ENCODE measurements at regions of chr7 and their contacts with region 1.

Region 1: GRCh38 chr7:27869044-27869443 is 129.1 kb downstream of the TAX1BP1 start:
- DNase-seq: no peak
- H3K4me3 ChIP-seq: no peak overlapping the region
- H3K27ac ChIP-seq: no peak overlapping the region
- H3K4me1 ChIP-seq: peaks cover 0 to 28% (median 19%) of the 10 kb centered on the region in 4 donors
- H3K27me3 ChIP-seq: no peaks in the 10 kb centered on the region
- CTCF ChIP-seq: no peak

Region 2: DNA sequence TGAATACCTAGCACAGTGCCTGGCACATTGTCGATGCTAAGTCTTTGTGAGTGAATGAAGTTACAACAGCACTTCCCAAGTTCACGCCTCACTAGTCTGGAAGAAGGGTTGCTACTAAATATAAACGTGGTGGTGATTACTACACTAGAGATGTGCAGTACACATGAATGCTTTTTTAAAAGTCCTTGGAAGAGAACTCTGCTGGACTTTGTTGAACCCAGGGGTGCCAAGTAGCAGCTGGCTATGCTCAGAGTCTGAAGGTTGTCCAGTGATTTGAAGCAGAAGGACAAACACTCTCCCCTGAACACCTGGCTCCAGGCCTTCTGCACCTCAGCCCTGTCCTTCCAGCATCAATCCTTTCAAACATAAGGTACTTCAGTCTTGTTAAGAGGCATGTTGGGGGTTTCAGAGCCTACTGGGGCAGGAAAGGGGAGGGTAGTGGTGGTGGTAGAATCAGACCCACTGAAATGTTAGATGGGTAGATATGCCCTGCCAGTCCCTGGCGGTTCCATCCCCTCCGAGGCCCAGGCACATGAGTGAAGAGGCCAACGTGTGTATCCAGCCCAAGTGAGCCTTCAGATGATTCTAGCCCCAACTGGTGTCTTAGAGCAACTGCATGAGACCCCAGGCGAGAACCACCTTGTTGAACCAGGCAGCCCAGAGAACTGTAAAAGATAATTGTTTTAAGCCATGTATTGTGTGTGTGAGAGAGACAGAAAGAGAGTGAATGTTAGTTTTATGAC is 34.7 kb before region 1 on chr7:
- intact Hi-C with region 1: no loop called
- DNase-seq: no peak
- H3K4me3 ChIP-seq: no peak overlapping the region
- H3K27ac ChIP-seq: no peak overlapping the region
- H3K4me1 ChIP-seq: peaks cover 0 to 8% (median 0%) of the 10 kb centered on the region in 4 donors
- H3K27me3 ChIP-seq: no peaks in the 10 kb centered on the region
- CTCF ChIP-seq: no peak

Region 3: GRCh38 chr7:27883696-27884095 is 14.7 kb after region 1 on chr7:
- intact Hi-C with region 1: loop called (anchors 1 kb)
- DNase-seq: no peak
- H3K4me3 ChIP-seq: no peak overlapping the region
- H3K27ac ChIP-seq: no peak overlapping the region
- H3K4me1 ChIP-seq: peaks cover 0 to 17% (median 2%) of the 10 kb centered on the region in 4 donors
- H3K27me3 ChIP-seq: no peaks in the 10 kb centered on the region
- CTCF ChIP-seq: no peak